ENCODE measurements at regions of chr17 and their contacts with region 1.

Region 1: GRCh38 chr17:72126563-72127486 is 6.0 kb downstream of the SOX9 start:
- DNase-seq: peak; percentile 60 to 97
- H3K4me3 ChIP-seq: peak overlapping the region; percentile 55; the same call in 1 of the 2 replicates
- H3K27ac ChIP-seq: peak overlapping the region; percentile 74
- H3K4me1 ChIP-seq: peaks cover 45% of the 10 kb centered on the region
- H3K27me3 ChIP-seq: no peaks in the 10 kb centered on the region
- CTCF ChIP-seq: 0 out of 2 replicates have a peak, but pooled peaks have one; percentile 6

Region 2: GRCh38 chr17:71870546-71870862 is 256.3 kb before region 1 on chr17:
- CTCF ChIA-PET with region 1: no interaction called
- POLR2A ChIA-PET with region 1: no interaction called
- intact Hi-C with region 1: no loop called
- DNase-seq: no peak
- H3K4me3 ChIP-seq: no peak overlapping the region
- H3K27ac ChIP-seq: no peak overlapping the region
- H3K4me1 ChIP-seq: no peaks in the 10 kb centered on the region
- H3K27me3 ChIP-seq: no peaks in the 10 kb centered on the region
- CTCF ChIP-seq: no peak

Region 3: DNA sequence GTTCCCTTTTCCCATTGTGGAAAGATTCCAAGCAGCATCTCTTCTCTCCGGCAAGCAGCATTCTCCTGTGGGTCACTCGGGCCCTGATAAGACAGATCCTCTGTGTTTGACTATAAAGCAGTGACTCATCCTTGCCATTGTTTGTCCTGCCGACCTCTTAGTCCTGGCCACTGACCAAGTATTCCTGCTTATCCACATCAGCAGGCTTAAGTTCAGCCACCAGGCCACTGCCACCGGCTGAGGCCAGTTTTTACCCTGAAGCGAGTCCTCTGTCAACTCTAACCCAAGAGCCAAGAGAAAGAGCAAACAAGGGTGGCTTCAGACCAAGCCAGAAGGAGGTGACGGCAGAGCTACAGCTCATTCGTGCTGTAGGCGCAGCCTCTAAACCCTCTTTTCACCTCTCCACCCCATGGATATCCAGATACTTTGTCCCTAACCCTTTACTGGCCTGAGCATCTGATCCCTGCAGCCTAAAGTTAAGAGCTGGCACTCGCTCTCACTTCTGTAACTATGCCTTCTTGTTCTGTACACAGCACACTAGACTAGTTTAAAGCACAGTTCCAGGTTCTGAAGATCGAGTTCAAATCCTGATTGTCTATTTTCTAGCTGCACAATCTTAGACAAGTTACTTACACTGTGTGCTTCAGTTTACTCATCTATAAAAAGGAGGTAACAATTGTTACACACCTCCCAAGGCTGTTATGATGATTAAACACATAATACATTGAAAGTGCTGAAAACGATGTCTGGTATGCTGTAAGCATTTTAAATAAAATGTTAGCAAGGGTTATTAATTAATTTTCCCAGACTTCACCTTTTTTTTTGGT is 25.0 kb after region 1 on chr17:
- CTCF ChIA-PET with region 1: no interaction called
- POLR2A ChIA-PET with region 1: interaction called, 6 read pairs
- intact Hi-C with region 1: loop called (anchors 1 kb)
- DNase-seq: peak; percentile 86 to 99
- H3K4me3 ChIP-seq: peak overlapping the region; percentile 38; the same call in 1 of the 2 replicates
- H3K27ac ChIP-seq: peak overlapping the region; percentile 92
- H3K4me1 ChIP-seq: peaks cover 36% of the 10 kb centered on the region
- H3K27me3 ChIP-seq: no peaks in the 10 kb centered on the region
- CTCF ChIP-seq: no peak

Region 4: DNA sequence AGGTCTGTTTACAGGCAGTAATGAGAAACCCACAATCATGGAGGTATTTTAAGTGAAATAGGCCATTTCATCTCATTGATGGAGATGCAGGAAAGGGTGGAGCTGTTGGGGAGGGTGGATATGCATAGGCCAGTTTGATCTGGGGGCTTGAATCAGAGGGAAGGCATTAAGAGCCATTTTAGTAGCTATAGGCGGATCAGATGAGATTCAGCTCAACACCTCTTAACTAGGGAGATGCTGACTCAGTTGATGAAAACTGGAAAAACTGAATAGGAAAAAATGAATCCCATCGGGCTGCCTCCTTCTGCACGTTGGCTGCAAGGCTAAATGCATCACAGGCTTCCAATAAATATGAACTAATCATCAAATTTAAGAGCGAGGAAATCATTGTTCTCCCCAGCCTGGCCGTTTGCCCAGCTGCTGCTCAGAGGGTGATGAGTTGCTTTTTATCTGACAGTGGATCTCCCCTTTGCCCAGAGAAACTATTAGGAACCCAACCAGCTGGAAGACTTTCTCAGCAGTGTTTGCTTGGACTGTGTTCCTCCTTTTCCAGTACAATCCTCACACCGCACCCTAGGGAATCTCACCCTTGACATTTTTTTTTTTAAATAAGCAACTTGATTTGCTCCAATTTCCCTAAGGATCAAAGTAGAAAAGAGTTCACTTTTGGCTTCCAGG is 143.6 kb after region 1 on chr17:
- CTCF ChIA-PET with region 1: no interaction called
- POLR2A ChIA-PET with region 1: no interaction called
- intact Hi-C with region 1: loop called (anchors 2 kb)
- DNase-seq: peak; percentile 62 to 82
- H3K4me3 ChIP-seq: no peak overlapping the region
- H3K27ac ChIP-seq: 0 out of 2 replicates have a peak overlapping the region, but pooled peaks have one; percentile 13
- H3K4me1 ChIP-seq: peaks cover 35% of the 10 kb centered on the region
- H3K27me3 ChIP-seq: no peaks in the 10 kb centered on the region
- CTCF ChIP-seq: no peak

Region 5: DNA sequence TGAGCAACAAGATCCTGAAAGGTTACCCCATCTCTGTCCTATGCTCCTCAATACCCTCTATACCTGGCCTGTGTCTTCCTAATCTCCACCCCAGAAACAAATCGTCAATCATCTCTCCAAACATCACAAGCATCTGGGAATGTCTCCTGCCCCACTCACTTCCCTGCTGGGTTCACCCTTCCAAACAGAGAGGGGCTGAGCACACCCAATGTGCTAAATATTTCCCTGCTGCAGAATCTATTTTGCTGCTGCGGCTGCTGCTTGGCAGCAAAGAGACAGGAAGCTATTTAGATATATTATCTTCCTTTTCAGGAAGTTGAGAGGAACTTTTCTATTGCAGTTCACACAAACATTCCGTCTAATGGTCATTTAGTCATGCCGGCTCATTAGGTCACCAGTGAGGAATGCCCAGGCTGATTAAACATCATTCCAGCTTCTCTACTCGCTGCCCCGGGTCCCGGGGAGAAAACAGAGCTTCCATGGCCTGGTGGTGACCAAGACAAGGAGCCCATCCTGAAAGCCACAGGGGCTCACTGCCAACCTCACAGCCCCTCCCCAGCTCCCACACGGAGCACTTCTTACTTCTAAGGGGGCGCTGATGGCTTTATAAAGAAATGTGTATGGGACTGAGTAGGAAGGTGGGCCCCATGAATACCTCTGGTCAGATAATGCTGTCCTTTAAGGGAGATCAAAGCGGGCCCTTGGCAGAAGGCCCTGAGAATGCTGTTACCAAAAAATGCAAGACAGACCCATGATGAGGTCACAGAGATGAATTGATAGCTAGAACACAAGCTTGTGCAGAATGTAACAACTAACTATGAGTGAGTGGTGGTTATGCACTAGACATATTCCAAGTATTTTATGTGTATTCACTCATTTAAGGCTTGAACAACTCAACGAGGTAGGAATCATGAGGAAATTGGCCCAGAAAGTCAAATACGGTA is 212.3 kb after region 1 on chr17:
- CTCF ChIA-PET with region 1: interaction called, 8 read pairs
- POLR2A ChIA-PET with region 1: interaction called, 5 read pairs
- intact Hi-C with region 1: loop called (anchors 1 kb)
- DNase-seq: peak; percentile 81 to 97
- H3K4me3 ChIP-seq: no peak overlapping the region; the same call in 1 of the 2 replicates
- H3K27ac ChIP-seq: peak overlapping the region; percentile 88
- H3K4me1 ChIP-seq: peaks cover 34% of the 10 kb centered on the region
- H3K27me3 ChIP-seq: no peaks in the 10 kb centered on the region
- CTCF ChIP-seq: no peak

Region 6: DNA sequence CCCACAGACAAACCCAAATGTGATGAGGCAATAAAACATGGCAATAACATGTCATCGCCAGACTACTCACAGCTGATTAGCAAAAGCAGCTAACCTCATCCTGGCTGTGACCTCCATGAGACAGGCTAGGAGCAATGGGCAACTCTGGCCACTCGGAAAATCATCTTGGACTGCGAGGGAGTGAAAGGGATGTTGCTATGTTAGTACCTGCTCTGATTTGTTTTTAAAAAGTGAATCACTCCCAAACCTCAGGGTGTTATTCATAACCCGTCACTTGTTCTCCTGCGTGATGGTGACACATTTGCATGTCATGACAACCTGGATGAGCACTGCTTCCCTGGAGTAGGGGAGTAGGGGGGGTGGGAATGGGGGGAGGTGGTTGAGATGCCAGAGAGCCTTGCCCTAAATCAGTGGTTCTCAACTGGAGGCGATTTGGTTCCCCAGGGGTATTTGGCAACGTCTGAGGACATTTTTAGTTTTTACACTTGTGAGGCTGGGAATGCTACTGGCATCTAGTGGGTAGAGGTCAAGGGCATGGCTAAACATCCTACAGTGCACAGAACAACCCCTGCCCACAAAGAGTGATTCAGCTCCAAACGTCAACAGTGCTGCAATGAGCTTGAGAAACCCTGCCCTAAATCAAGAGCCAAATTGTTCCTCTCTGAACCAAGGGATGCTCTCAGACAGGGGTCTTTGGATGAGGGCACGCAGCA is 235.7 kb after region 1 on chr17:
- CTCF ChIA-PET with region 1: no interaction called
- POLR2A ChIA-PET with region 1: interaction called, 3 read pairs
- intact Hi-C with region 1: loop called (anchors 1 kb)
- DNase-seq: peak in 1 of 2 experiments; percentile 79
- H3K4me3 ChIP-seq: no peak overlapping the region
- H3K27ac ChIP-seq: peak overlapping the region; percentile 41
- H3K4me1 ChIP-seq: peaks cover 44% of the 10 kb centered on the region
- H3K27me3 ChIP-seq: no peaks in the 10 kb centered on the region
- CTCF ChIP-seq: no peak